Left colon (tissue), 2 donors: ENCODE measurements at regions of chr2 and their contacts with region 1.

Region 1: DNA sequence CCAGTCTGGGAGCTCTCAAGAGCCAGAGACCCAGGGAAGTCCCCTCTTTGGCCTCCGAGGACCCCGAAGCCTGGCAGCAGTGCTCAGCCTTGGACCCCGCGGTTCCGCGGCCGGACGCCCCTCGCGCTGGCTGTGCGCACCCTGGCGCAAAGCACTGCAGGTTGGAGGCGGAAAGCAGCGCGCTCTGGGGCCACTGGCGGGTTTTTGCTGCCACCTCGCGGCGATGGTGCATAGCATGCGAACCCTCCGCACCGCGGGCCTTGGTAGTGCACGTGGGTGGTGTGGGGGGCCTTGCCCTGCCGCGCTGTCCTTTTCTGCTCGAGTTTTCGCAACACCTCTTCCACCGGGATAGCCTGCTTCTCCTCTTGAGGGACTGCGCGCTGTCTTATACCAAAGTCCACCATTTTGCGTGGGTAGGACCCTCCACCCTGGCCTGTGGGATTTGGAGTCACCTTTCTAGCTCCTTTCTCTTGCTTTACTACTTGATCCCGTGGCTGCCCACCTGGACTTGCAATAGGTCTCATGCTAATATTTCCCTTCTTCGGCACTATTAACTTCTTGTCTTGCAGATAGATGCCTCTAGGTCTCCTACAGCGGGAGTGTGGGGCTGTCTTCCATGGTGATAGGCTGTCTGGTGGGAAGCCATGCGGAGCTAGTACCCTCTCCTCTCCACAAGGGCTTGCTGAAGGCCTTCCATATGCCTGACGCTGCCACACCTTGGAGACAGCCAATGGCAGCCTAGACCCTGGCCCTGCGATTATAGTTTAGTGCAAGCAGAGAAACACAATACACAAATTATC is 14.3 kb downstream of the SIX3 start:
- DNase-seq: peak; percentile 49 to 78
- ATAC-seq: peak; percentile 84

Region 2: DNA sequence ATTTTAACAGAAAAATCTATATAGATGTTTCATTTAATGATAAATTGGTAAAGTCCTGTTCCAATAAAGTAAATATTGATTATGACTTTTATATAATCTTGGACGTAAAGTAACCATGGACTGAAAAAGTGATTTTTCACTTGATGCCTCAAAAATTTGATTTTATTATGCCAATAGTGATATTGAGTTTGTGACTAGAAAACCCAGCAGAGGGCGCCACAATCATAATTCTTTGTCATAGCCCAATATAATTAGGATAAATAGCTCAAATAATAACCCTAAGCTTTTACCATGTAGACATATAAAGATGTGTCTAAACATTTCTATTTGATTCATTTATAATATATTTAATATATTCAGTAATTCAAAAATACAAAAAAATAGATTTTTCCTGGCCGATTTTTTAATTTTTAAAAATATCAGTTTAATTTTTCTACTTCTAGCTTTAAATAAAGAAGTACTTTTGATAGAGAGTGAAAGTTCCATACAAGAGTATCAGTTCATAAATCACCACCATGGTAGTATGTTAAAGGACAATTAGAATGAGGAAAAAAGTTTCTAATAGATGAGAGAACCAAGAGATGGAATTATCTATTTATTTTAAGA is 563.4 kb before region 1 on chr2:
- intact Hi-C with region 1: loop called in 1 of 2 experiments (anchors 10 kb)
- DNase-seq: peak in 1 of 2 donors; percentile 66
- ATAC-seq: no peak

Region 3: DNA sequence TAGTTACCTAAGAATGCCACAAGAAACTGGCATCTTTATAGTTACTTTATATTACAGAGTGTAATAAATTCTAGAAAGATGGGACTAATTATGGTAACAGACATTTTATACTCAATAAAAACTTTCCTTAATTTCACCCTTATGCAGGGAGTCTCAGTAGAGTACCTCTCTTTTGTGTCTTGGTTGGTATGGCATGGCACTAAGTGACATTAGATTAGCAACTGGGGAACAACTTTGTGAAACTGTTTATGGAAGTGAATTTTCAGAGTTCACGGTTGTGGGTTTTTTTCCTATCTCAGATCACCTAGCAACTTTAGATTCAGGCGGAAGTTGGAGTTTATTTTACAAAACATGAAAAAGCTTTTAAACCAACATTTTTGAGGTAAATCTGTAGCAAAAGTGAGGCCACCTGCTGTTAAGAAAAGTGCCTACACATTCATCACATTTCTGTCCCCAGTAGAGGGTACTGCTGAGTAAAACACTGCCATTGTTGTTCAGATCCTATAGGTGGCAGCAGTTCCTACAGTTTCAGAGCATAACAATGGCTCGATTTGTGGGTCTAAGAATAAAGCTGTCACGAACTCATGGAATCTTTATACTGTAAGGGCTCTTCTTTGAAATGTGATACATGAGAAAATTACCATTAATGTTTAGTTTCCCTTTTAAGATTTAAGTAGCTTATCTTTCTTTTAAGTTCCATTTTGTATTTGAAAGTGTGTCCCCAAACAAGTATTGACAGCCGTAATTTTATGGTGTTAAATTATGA is 476.5 kb before region 1 on chr2:
- intact Hi-C with region 1: loop called in 1 of 2 experiments (anchors 5 kb)
- DNase-seq: peak in 1 of 2 donors; percentile 5
- ATAC-seq: peak; percentile 99

Region 4: GRCh38 chr2:44668336-44668735 is 287.5 kb before region 1 on chr2:
- intact Hi-C with region 1: no loop called
- DNase-seq: no peak
- ATAC-seq: no peak